Activated T-helper 1 cell treated with anti-CD3 and anti-CD28 coated beads, Interleukin-12 subunit alpha, Interleukin-12 subunit beta, Interleukin-2, Interleukin-4 antibody, amounts not matched to agents 30 ng/mL and 10 ng/mL and 1 ng/mL, durations not matched to agents 14 hours and 24 hours and 36 hours (primary cell): ENCODE measurements at regions of chr18 and their contacts with region 1.

Region 1: GRCh38 chr18:75209129-75209950 is at the start of gene PTGR3:
- DNase-seq: peak; percentile 77
- H3K4me3 Mint-ChIP-seq: peak within 1 kb of the TSS; percentile 96
- H3K27ac Mint-ChIP-seq: peak within 1 kb of the TSS; percentile 98
- H3K4me1 Mint-ChIP-seq: peaks cover 60% of the 10 kb centered on the region
- H3K27me3 Mint-ChIP-seq: peaks cover 35% of the 10 kb centered on the region
- total RNA-seq, gene PTGR3: 19.1 and 23.3 TPM in 2 replicates

Region 2: GRCh38 chr18:74147779-74148542 is 1061.4 kb before region 1 on chr18 and contains the starts of genes FBXO15 and TIMM21:
- intact Hi-C with region 1: loop called (anchors 2 kb)
- DNase-seq: peak; percentile 94
- H3K4me3 Mint-ChIP-seq: peak within 1 kb of the TSS; percentile 92
- H3K27ac Mint-ChIP-seq: peak within 1 kb of the TSS; percentile 96
- H3K4me1 Mint-ChIP-seq: peaks cover 51% of the 10 kb centered on the region
- H3K27me3 Mint-ChIP-seq: peaks cover 8% of the 10 kb centered on the region
- total RNA-seq, gene FBXO15: 0.83 and 1.0 TPM in 2 replicates
- total RNA-seq, gene TIMM21: 54.1 and 60.2 TPM in 2 replicates

Region 3: DNA sequence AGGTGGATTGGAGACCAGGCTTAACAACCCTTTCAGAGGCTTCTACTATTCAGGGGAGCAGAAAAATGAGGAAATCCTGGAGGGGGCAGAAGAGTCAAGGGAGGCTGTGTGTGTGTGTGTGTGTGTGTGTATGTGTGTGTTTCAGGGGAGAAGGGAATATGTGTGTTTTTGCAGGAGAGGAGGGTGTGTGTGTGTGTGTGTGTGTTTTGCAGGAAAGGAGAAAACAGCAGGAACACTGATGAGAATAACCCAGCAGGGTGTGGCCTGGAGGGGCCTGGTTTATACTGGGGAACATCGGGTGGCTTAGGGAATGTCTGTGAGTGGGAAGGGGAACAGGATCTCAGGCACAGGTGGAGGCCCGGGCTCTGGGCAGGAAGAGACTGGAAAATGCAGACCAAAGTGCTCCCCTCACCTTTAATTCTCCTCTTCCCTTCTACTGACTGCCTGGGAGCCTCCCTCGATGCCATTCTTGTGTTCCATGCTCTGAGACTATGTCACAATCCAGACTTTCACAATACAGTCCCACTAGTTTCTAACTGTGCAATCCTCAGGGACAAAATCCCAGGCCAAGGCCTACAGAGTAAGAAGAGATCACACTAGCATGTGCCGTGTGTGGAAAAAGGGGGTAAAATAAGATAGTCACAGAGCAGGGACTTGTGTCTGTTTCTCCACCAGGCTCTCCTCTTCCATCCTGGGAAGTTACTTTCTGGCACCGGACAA is 927.5 kb before region 1 on chr18:
- intact Hi-C with region 1: no loop called
- DNase-seq: no peak
- H3K4me3 Mint-ChIP-seq: no peak overlapping the region
- H3K27ac Mint-ChIP-seq: no peak overlapping the region
- H3K4me1 Mint-ChIP-seq: peaks cover 24% of the 10 kb centered on the region
- H3K27me3 Mint-ChIP-seq: peaks cover 3% of the 10 kb centered on the region

Region 4: GRCh38 chr18:74652392-74652988 is 556.9 kb before region 1 on chr18:
- intact Hi-C with region 1: loop called (anchors 10 kb)
- DNase-seq: no peak
- H3K4me3 Mint-ChIP-seq: no peak overlapping the region
- H3K27ac Mint-ChIP-seq: no peak overlapping the region
- H3K4me1 Mint-ChIP-seq: no peaks in the 10 kb centered on the region
- H3K27me3 Mint-ChIP-seq: no peaks in the 10 kb centered on the region

Region 5: GRCh38 chr18:74951165-74951760 is 258.1 kb before region 1 on chr18:
- intact Hi-C with region 1: loop called (anchors 5 kb)
- DNase-seq: peak; percentile 14
- H3K4me3 Mint-ChIP-seq: peak overlapping the region; percentile 43
- H3K27ac Mint-ChIP-seq: peak overlapping the region; percentile 75
- H3K4me1 Mint-ChIP-seq: peaks cover 23% of the 10 kb centered on the region
- H3K27me3 Mint-ChIP-seq: no peaks in the 10 kb centered on the region

Region 6: DNA sequence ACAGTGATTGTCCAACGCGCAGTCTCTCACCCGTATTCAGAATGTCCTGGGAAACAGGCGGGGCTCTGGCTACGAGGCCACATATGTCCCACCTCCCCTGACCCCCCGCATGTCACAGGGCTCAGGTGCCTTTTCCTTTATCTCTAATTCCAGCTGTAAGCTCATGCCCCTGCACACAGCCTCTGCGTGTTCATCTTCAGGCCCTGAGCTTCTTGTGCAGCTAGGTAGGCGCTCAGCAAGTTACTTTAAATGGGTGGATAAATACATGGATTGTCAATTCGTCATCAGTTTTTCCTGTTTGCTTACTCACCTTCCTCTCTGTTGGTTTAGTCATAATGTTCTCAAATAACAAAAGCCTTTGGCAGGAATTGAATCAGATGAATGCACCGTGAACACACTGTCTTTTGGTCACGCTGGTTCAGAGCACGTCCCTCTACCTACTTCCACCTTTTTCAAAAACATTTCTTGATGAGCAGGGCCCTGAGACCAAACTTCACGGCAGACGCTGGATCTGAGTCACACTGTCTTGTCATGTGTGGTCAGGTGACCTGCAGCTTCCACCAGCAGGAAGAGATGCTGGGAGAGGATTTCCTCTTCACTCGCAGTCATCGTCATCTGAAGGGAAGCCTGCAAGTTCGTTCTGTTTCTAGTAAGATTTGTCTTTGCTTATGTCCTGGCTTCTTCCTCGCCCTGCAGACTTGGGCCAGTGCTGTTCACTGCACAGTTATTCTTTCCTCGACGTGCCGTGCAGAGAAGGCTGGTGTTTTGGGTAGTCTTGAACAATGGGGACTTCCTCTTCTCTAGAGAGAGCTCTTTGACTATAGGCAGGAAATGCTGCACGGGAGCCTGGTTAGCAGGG is 138.5 kb before region 1 on chr18:
- intact Hi-C with region 1: loop called (anchors 1 kb)
- DNase-seq: peak; percentile 70
- H3K4me3 Mint-ChIP-seq: peak overlapping the region; percentile 78
- H3K27ac Mint-ChIP-seq: peak overlapping the region; percentile 96
- H3K4me1 Mint-ChIP-seq: peaks cover 31% of the 10 kb centered on the region
- H3K27me3 Mint-ChIP-seq: no peaks in the 10 kb centered on the region

Region 7: GRCh38 chr18:75261430-75262223 is 52.3 kb after region 1 on chr18:
- intact Hi-C with region 1: loop called (anchors 5 kb)
- DNase-seq: no peak
- H3K4me3 Mint-ChIP-seq: peak overlapping the region; percentile 7
- H3K27ac Mint-ChIP-seq: peak overlapping the region; percentile 41
- H3K4me1 Mint-ChIP-seq: peaks cover 14% of the 10 kb centered on the region
- H3K27me3 Mint-ChIP-seq: no peaks in the 10 kb centered on the region

Region 8: DNA sequence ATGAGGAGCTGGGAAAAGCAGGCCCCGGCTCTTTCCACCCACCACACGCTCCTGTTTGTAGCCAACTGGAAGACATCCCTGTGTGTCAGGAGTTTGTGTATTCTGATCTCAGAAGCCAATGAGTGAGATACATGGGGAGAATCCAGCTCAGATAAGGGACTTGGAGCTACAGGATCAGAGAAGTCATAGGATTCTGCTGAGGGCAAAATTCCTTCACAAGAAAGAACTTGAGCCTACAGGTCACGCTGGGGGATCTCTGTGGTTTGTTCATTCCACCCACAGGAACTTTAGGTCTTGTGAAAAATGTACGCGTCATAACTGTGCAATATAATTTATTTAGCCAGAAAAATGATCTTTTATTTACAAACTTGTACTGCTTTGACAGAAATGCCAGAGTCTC is 298.3 kb after region 1 on chr18:
- intact Hi-C with region 1: no loop called
- DNase-seq: no peak
- H3K4me3 Mint-ChIP-seq: no peak overlapping the region
- H3K27ac Mint-ChIP-seq: no peak overlapping the region
- H3K4me1 Mint-ChIP-seq: no peaks in the 10 kb centered on the region
- H3K27me3 Mint-ChIP-seq: peaks cover 5% of the 10 kb centered on the region

Region 9: DNA sequence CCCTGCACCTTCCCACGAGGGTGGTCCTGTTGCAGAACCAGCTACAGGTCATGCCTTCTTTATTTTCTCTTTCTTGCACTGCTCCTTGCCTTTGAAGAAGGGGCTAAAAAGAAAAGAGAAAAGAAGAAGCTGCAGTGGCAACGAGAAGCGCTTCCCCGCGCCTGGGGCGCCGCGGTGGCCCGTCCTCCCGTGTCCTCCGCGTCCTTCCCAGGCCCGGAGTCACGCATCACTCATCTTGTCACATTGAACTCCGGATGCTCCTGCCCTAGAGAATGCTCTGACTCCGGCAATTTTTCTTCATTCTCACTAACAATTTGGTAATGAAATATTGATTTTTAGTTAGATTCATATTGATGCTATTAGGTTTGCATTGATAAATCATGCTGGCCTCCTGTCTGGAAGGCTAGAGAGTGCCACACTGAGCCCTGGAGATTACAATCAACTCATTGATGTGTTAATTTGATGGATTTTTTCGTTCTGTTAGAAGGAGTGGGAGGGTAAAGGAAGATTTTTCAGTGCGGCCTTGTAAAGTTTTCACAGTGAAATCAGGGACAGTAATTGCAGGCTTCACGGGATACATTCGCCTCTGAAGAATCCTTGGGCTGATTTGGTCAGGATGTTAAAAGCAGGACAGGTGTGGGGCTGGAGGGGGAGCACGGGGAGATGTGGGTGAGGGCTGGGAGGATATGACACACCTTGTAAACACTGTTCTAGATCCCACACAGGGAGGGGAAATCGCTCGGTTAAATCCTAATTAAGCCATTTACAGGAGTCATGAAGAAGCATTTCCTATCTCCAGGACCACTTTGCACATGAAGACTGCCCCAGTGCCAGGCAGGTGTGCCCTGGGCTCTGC is 936.4 kb after region 1 on chr18:
- intact Hi-C with region 1: no loop called
- DNase-seq: no peak
- H3K4me3 Mint-ChIP-seq: no peak overlapping the region
- H3K27ac Mint-ChIP-seq: no peak overlapping the region
- H3K4me1 Mint-ChIP-seq: no peaks in the 10 kb centered on the region
- H3K27me3 Mint-ChIP-seq: no peaks in the 10 kb centered on the region

Region 10: GRCh38 chr18:77067291-77068061 is 1858.1 kb after region 1 on chr18:
- intact Hi-C with region 1: loop called (anchors 2 kb)
- DNase-seq: peak; percentile 75
- H3K4me3 Mint-ChIP-seq: peak overlapping the region; percentile 76
- H3K27ac Mint-ChIP-seq: peak overlapping the region; percentile 96
- H3K4me1 Mint-ChIP-seq: peaks cover 100% of the 10 kb centered on the region
- H3K27me3 Mint-ChIP-seq: no peaks in the 10 kb centered on the region